H1 (cell line): ENCODE measurements at regions of chr20 and their contacts with region 1.

Region 1: DNA sequence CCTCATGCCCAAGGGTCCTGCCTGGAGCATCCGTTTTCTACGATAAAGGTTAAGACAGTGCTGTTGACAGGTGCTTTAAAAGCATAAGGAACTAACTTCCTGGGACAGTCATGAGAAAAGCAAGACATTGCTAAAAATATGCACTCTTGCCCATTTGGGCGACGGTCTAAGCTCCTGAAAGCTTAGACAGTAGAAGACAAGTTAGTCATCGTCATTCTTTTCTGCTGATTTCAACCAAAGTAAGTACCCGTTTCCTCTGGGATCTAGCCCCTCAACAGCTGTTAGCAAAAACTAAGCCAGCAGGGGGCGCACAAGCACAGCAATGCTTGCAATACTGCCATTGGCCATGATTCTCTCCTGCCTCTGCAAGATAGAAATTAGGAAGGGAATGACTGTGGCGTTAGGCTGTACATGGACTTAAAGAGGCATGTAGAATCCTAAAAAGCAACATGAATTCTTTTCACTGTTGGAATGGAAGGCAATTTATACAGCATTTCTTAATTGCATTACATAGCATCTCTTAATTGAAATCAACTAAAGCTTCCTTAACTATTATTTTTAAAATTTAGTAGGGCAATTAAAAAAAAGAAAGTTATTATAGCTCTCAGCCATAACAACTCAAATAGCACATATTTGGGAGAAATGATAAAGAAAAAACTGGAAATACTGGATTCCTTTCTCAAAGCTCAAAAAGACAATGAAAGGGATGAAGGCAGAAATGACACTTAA is 147.8 kb upstream of the RALGAPA2 start:
- DNase-seq: peak; percentile 82 to 99
- H3K4me3 ChIP-seq: no peak overlapping the region
- H3K27ac ChIP-seq: no peak overlapping the region
- H3K4me1 ChIP-seq: no peaks in the 10 kb centered on the region; a peak in 1 of 7 replicates
- H3K27me3 ChIP-seq: no peaks in the 10 kb centered on the region
- CTCF ChIP-seq: peak; percentile 72 to 99 (median 95)
- EP300 ChIP-seq: no peak
- POLR2A ChIP-seq: no peak
- RAD21 ChIP-seq: peak; percentile 95 to 96

Region 2: DNA sequence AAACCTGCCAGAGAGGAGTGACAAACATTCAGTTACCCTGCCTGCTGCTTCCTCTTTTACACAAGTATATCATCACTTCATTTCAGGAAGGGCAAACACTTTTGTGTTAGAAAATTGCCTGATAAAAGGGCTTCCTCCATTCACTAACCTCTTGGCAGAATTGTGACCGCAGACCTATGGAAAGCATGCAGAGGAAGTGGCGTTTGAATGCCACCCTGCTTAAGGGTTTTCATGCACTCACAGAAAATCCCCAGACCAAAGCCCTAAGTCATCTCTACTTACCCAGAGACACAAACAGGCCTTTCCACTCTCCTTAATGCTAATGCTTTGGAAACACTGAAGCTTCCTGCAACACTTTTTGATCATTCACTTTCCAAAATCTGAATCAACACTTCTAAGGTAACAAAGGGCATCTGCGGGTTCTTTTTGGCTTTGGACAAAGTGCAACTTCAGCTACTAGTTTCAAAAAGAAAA is 125.7 kb before region 1 on chr20:
- CTCF ChIA-PET with region 1: no interaction called
- POLR2A ChIA-PET with region 1: no interaction called
- DNase-seq: no peak
- H3K4me3 ChIP-seq: no peak overlapping the region
- H3K27ac ChIP-seq: no peak overlapping the region
- H3K4me1 ChIP-seq: peaks cover 0 to 2% (median 0%) of the 10 kb centered on the region in 4 experiments; a peak in 1 of 7 replicates
- H3K27me3 ChIP-seq: no peaks in the 10 kb centered on the region
- CTCF ChIP-seq: no peak
- EP300 ChIP-seq: no peak
- POLR2A ChIP-seq: no peak
- RAD21 ChIP-seq: no peak

Region 3: DNA sequence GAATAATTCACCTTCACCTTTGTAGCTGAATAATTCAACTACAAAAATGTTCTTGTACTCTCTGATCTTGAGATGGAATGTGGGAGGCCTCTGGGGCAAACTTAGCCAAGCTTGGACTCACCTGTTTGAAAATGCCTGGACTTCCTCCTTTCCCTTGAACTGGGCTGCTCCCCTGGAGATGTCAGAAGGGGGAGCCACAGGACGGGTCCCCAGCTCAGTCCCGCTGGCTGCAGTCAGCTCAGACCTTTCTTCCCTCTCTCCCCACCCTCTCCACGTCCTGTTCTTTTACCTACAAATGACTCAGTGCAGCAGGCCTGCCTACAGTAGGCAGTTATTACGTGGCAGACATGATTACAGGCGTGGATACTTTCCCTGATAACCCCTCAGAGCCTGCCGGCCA is 16.3 kb before region 1 on chr20:
- CTCF ChIA-PET with region 1: interaction called, 67 read pairs
- POLR2A ChIA-PET with region 1: interaction called, 3 read pairs
- DNase-seq: no peak
- H3K4me3 ChIP-seq: no peak overlapping the region
- H3K27ac ChIP-seq: no peak overlapping the region
- H3K4me1 ChIP-seq: no peaks in the 10 kb centered on the region
- H3K27me3 ChIP-seq: peaks cover 0 to 2% (median 0%) of the 10 kb centered on the region in 4 experiments; a peak in 1 of 7 replicates
- CTCF ChIP-seq: peak; percentile 53 to 66 (median 55)
- EP300 ChIP-seq: no peak
- POLR2A ChIP-seq: no peak
- RAD21 ChIP-seq: peak; percentile 77 to 78

Region 4: DNA sequence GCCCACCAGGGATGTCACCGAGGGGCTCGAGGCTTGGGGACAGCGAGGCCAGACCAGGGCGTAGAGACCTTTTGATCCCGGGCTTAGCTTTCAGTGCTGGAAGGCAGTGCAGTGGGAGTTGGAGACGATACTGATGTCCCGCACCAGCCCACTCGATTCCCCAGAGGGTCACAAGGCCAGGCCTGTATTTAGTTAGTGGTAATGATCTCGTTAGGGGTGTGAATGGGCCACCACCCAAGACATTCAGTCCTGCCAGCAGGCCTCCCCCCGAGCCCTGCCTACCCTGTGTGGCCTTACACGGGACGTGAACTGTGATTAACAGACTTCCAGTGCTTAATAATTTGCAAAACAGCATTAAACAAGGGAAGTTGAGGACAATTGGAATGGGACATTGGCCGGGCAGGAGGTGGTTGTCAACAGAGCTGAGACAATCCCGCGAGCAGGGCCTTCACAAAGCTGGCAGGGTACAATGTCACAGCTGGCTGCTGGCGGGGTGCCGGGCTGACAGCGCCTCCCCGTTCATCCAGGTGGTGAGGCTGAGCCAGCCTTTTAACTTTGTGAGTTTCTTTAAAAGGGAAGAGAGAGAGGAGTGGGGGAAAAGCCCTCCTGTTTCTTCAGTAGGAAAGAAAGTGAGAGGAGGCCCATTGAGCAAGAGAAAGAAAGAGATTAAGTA is 27.5 kb after region 1 on chr20:
- CTCF ChIA-PET with region 1: interaction called, 10 read pairs
- POLR2A ChIA-PET with region 1: no interaction called
- DNase-seq: peak in 1 of 2 experiments; percentile 72
- H3K4me3 ChIP-seq: no peak overlapping the region
- H3K27ac ChIP-seq: no peak overlapping the region
- H3K4me1 ChIP-seq: peaks cover 4 to 16% (median 12%) of the 10 kb centered on the region in 4 experiments
- H3K27me3 ChIP-seq: no peaks in the 10 kb centered on the region
- CTCF ChIP-seq: no peak
- EP300 ChIP-seq: no peak
- POLR2A ChIP-seq: no peak
- RAD21 ChIP-seq: no peak

Region 5: DNA sequence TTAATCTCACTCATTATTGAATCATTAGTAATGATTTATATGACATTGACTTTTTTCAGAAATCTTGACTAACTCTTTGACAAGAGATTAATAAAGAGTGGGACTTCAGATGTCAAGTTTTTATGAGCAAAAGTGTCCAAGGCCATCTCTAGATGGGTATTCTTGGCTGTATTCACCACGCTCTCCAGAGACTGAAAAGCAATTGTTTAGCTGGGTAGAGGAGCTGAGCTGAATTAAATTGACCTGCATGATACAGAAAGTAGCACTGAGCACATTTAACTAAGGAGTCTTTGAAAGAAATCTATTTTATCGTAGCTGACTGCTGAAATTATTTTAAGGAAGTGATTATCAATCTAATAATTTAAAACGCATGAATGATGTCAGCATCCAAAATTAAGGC is 156.5 kb after region 1 on chr20:
- CTCF ChIA-PET with region 1: interaction called, 13 read pairs
- POLR2A ChIA-PET with region 1: no interaction called
- DNase-seq: no peak
- H3K4me3 ChIP-seq: no peak overlapping the region
- H3K27ac ChIP-seq: no peak overlapping the region
- H3K4me1 ChIP-seq: peaks cover 0 to 11% (median 2%) of the 10 kb centered on the region in 4 experiments; a peak in 2 of 7 replicates
- H3K27me3 ChIP-seq: no peaks in the 10 kb centered on the region
- CTCF ChIP-seq: no peak
- EP300 ChIP-seq: no peak
- POLR2A ChIP-seq: no peak
- RAD21 ChIP-seq: no peak

Region 6: GRCh38 chr20:21099751-21100577 is 239.7 kb after region 1 on chr20:
- CTCF ChIA-PET with region 1: interaction called, 23 read pairs
- POLR2A ChIA-PET with region 1: interaction called, 4 read pairs
- DNase-seq: peak in 1 of 2 experiments; percentile 68
- H3K4me3 ChIP-seq: peak overlapping the region; percentile 44 to 78 (median 64)
- H3K27ac ChIP-seq: no peak overlapping the region
- H3K4me1 ChIP-seq: peaks cover 10 to 23% (median 17%) of the 10 kb centered on the region in 4 experiments
- H3K27me3 ChIP-seq: peaks cover 26 to 84% (median 74%) of the 10 kb centered on the region in 4 experiments
- CTCF ChIP-seq: no peak
- EP300 ChIP-seq: no peak
- POLR2A ChIP-seq: no peak
- RAD21 ChIP-seq: no peak